Common myeloid progenitor, CD34-positive (primary cell): ENCODE measurements at regions of chr3 and their contacts with region 1.

Region 1: DNA sequence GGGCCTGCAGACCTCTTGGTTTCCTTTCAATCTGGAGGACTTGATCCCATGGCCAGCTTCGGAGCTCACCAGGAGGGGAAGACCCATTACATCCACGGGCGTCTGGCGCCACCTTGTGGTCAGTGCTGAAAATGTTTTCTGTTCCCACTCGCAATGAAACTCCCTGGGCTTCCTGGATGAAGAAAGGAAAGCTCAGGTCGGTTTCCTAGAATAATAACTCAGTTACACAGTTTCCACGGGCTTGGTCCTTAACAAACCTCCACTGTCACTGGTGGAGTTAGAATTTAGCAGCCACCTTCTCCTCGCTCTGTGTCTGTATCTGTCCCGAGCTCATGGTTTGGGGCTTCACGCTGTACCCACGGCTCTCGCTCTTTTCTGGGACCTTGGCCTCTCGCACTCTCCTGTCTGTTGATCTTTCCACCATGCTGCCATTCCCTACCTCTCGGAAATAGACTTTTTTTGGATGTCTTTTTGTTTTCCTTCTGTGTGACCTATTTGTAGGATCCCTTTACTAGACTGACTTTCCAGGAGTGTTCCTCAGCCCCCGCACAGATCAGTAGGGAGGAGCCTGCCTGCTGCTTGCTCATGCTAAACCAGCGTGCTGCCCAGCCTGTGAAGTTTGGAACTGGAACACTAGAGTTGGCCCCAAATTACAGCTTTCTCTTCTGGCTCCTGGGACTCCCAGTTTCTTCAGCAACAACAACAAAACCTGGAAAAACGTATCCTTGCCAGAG is 56.3 kb downstream of the IL20RB start:
- DNase-seq: peak; percentile 80 to 86 (median 81)
- H3K4me3 ChIP-seq: peak overlapping the region; percentile 55 to 83 (median 74)
- H3K27ac ChIP-seq: peak overlapping the region in 1 of 2 experiments; percentile 70
- H3K4me1 ChIP-seq: peaks cover 0 to 10% (median 5%) of the 10 kb centered on the region in 4 experiments
- H3K27me3 ChIP-seq: no peaks in the 10 kb centered on the region

Region 2: GRCh38 chr3:136075218-136075808 is 938.8 kb before region 1 on chr3:
- CTCF ChIA-PET with region 1: interaction called, 12 read pairs
- POLR2A ChIA-PET with region 1: no interaction called
- DNase-seq: peak; percentile 81 to 90 (median 81)
- H3K4me3 ChIP-seq: no peak overlapping the region
- H3K27ac ChIP-seq: no peak overlapping the region
- H3K4me1 ChIP-seq: peaks cover 3 to 10% (median 6%) of the 10 kb centered on the region in 4 experiments
- H3K27me3 ChIP-seq: no peaks in the 10 kb centered on the region

Region 3: DNA sequence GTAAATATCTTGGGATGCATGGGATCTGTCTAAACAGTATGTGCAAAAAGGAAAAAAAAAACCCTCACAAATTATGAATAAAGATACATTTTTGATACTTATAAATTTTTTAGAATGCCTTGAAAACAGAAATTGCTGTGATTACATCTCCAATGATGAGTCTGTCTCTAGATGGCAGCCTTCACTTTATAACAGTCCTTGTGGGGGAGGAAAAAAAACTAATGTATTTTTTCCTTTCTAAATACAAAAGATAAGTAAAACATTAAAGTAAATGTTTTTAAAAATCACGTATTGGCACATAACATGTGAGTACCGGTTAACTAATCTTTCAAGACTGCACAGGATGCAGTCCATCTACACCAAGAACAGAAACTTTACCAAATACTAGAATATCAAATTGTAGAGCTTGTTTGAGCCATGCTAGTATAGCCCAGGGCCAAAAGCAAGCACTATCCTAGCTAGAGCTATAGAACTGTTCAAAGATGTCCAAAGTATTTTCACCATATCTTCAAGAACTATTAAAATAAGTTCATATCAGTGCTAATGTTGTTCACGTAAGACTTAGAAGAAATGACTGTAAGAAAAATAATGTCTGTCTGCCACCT is 468.4 kb before region 1 on chr3:
- CTCF ChIA-PET with region 1: interaction called, 27 read pairs
- POLR2A ChIA-PET with region 1: no interaction called
- DNase-seq: peak; percentile 17 to 29 (median 23)
- H3K4me3 ChIP-seq: no peak overlapping the region
- H3K27ac ChIP-seq: peak overlapping the region in 1 of 2 experiments; percentile 37
- H3K4me1 ChIP-seq: peaks cover 0 to 4% (median 0%) of the 10 kb centered on the region in 4 experiments
- H3K27me3 ChIP-seq: no peaks in the 10 kb centered on the region